ENCODE measurements at regions of chr2 and their contacts with region 1.

Region 1: GRCh38 chr2:209960676-209961630 is 41.5 kb upstream of the RPE start:
- DNase-seq: peak; percentile 44
- ATAC-seq: peak; percentile 97
- H3K4me3 Mint-ChIP-seq: peak overlapping the region; percentile 0
- H3K27ac Mint-ChIP-seq: no peak overlapping the region
- H3K4me1 Mint-ChIP-seq: peaks cover 23% of the 10 kb centered on the region
- H3K27me3 Mint-ChIP-seq: peaks cover 75% of the 10 kb centered on the region
- CTCF ChIP-seq: peak; percentile 57

Region 2: DNA sequence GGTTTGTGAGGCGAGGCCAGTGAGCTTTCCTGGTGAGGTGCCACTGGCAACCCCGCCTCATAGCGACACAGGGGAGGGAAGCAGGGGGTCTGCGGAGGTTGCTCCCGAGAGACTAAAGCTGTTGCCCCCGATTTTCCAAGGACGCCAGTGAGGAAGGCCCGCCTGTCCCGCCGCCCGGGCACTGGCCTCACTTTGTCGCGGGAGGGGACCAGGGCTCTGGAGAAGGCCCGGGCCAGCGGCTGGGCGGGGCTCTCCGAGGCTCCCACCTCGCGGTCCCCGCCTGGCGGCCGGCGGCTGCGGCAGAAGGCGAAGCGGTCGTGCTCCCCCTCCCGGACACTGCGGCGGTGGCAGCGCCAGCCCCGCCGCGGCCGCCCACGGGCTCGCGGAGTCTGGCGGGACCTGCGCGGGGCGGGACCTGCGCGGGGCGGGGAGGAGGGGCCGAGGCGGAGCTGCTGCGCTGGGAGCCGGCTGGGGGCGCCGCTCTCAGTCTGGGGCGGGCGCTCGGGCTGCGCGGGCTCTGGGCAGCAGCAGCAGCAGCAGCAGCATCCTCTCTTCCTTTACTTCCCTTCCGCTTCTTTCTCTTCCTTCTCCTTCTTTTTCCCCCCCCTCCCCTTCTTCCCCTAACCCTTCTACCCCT is 537.3 kb before region 1 on chr2 and contains the start of gene MAP2:
- CTCF ChIA-PET with region 1: interaction called, 16 read pairs
- POLR2A ChIA-PET with region 1: interaction called, 3 read pairs
- DNase-seq: peak; percentile 89
- ATAC-seq: peak; percentile 91
- H3K4me3 Mint-ChIP-seq: peak within 1 kb of the TSS; percentile 87
- H3K27ac Mint-ChIP-seq: no peak within 1 kb of the TSS
- H3K4me1 Mint-ChIP-seq: peaks cover 41% of the 10 kb centered on the region
- H3K27me3 Mint-ChIP-seq: peaks cover 37% of the 10 kb centered on the region
- CTCF ChIP-seq: peak; percentile 68; the same call in 1 of the 2 replicates
- total RNA-seq, gene MAP2: 3.7 to 7.6 TPM (median 3.7 TPM) in 3 replicates

Region 3: DNA sequence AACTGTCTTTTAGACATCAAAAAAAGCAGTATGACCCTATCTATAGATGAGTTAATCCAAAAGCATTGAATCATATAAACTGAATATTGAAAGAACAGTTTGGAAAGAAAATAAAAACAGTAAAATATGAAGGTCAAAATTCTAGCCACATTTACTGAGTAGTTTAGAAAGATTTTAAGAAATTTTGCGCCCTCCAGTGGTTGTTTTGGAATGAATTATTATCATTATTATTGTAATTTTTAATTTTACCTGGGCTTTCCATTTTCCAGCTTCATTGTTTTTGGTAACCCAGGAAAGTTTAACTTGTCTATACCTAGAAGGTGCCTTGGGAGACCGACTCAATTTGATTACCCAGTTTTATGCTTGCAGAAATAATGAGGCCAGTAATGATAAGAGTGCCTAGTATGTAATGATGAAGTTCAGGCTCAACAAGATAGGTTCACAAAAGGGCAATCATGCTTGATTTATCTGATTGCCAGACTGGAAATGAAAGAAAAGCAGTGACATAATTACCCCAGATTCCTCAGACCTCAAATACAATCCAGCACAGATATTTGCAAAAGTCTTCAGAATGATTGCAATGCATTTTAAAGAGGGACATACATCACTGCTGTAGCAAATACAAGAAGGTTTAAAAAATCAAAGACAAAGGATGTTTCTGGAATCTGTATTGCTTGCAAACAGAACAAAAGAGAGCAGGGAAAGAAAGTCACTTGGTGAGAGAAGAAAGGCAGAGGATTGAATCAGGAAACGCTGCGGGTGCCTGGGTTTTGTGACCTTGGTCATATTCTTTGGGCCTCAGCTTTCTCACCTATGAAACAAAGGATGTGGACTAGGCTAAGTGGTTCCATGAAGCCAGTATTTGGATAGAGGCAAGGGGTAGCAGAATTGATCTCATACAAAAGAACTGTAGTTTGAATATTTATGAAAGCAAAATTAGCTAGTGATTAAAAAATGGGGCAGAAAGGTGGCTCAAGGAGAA is 383.3 kb before region 1 on chr2:
- CTCF ChIA-PET with region 1: interaction called, 27 read pairs
- POLR2A ChIA-PET with region 1: no interaction called
- DNase-seq: no peak
- ATAC-seq: peak; percentile 53
- H3K4me3 Mint-ChIP-seq: no peak overlapping the region
- H3K27ac Mint-ChIP-seq: peak overlapping the region; percentile 69
- H3K4me1 Mint-ChIP-seq: peaks cover 32% of the 10 kb centered on the region
- H3K27me3 Mint-ChIP-seq: no peaks in the 10 kb centered on the region
- CTCF ChIP-seq: peak; percentile 19; the same call in 1 of the 2 replicates

Region 4: GRCh38 chr2:209771474-209772289 is 189.3 kb before region 1 on chr2 and contains the start of gene UNC80:
- CTCF ChIA-PET with region 1: interaction called, 21 read pairs
- POLR2A ChIA-PET with region 1: interaction called, 3 read pairs
- DNase-seq: peak; percentile 87
- ATAC-seq: peak; percentile 90
- H3K4me3 Mint-ChIP-seq: peak within 1 kb of the TSS; percentile 67
- H3K27ac Mint-ChIP-seq: no peak within 1 kb of the TSS
- H3K4me1 Mint-ChIP-seq: peaks cover 11% of the 10 kb centered on the region
- H3K27me3 Mint-ChIP-seq: peaks cover 74% of the 10 kb centered on the region
- CTCF ChIP-seq: no peak
- total RNA-seq, gene UNC80: 0.30 to 0.48 TPM (median 0.34 TPM) in 3 replicates

Region 5: GRCh38 chr2:209901172-209901571 is 59.8 kb before region 1 on chr2:
- CTCF ChIA-PET with region 1: no interaction called
- POLR2A ChIA-PET with region 1: no interaction called
- DNase-seq: no peak
- ATAC-seq: no peak
- H3K4me3 Mint-ChIP-seq: no peak overlapping the region
- H3K27ac Mint-ChIP-seq: no peak overlapping the region
- H3K4me1 Mint-ChIP-seq: peaks cover 4% of the 10 kb centered on the region; the same call in 1 of the 2 replicates
- H3K27me3 Mint-ChIP-seq: no peaks in the 10 kb centered on the region; the same call in 1 of the 2 replicates
- CTCF ChIP-seq: no peak

Region 6: GRCh38 chr2:209933499-209934483 is 27.2 kb before region 1 on chr2:
- CTCF ChIA-PET with region 1: interaction called, 10 read pairs
- POLR2A ChIA-PET with region 1: no interaction called
- DNase-seq: no peak
- ATAC-seq: no peak
- H3K4me3 Mint-ChIP-seq: no peak overlapping the region
- H3K27ac Mint-ChIP-seq: no peak overlapping the region
- H3K4me1 Mint-ChIP-seq: no peaks in the 10 kb centered on the region
- H3K27me3 Mint-ChIP-seq: no peaks in the 10 kb centered on the region
- CTCF ChIP-seq: no peak